HCT116 (cell line): ENCODE measurements at regions of chr4 and their contacts with region 1.

Region 1: DNA sequence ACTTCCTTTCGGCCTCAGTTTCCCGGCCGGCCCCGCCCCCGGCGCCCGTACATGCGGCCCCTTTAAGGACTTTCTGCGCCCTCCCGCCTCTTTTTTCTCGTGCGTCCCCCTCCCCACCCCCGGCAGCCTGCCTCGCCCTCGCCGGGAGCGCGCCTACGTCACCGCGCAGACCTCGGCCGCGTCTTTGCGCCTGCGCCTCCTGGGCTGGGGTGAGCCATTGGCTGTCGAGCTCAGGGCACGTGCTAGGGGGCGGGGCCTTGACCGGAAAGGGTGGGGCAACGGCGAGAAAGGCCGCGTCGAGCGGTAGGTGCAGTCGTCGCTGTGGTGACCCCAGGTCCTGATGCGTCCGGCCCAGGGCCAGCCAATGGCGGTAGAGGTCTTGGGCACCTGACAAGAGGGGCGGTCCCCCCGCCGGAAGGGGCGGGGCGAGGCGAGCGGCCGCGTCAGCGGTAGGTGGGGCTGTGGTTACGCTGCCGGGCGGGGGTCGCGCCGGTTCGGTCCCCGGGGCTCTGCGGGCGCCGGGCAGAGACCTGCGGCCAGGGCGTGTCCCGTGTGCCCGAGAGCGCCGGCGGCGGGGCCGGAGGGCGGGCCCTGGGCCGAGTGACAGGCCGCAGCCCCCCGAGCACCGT is at the start of gene UVSSA:
- DNase-seq: peak; percentile 99
- ATAC-seq: peak; percentile 91
- H3K4me3 ChIP-seq: peak within 1 kb of the TSS; percentile 74 to 76
- H3K27ac ChIP-seq: peak within 1 kb of the TSS; percentile 99
- H3K4me1 ChIP-seq: peaks cover 8 to 32% of the 10 kb centered on the region in 2 experiments
- H3K27me3 ChIP-seq: no peaks in the 10 kb centered on the region
- CTCF ChIP-seq: no peak
- POLR2A ChIP-seq: no peak
- RAD21 ChIP-seq: no peak
- total RNA-seq, gene UVSSA: 30.5 TPM

Region 2: DNA sequence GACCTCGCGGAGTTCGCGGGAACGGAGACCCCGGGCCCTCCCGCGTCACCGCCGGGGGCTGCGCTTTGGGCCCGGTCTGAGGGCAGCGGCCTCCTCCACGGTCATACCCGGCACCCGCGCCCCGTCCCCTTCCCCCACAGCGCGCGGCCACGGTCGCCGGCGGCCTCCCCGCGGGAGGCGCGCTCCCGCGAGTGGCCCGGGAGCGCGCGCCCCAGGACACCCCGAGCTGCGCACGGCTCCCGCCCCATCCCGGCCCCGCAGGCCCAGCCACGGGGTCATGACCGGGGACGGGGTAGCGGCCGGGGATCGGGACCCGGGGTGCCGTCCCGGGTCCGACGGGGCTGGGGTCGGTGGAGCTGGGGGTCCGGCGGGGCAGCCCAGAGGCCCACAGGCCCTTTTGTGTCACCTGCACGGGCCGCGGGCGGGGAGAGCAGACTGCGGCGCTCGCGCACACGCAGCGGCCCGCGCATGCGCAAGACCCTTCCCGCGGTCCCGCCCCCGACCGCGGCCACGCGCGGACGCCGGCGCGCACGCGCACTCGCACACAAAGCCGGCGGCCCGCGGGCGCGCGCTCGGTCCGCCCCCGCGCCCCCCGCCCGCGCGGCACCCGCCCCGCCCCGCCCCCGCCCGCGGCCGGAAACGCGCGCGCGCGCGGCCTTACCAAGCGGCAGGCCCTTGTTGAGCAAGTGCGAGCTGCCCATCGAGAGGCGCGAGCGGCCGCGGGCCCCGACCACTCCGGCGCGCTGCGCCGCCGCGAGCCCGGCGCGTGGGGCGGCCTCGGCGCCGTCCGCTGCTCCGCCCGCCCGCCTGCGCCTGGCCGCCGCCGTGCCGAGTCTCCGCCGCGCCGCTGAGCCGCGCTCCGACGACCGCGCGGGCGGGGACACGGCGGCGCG is 98.4 kb before region 1 on chr4 and contains the start of gene CTBP1:
- CTCF ChIA-PET with region 1: no interaction called
- POLR2A ChIA-PET with region 1: interaction called, 8 read pairs
- RAD21 ChIA-PET with region 1: no interaction called
- intact Hi-C with region 1: loop called (anchors 1 kb)
- DNase-seq: peak; percentile 59
- ATAC-seq: peak; percentile 67
- H3K4me3 ChIP-seq: peak within 1 kb of the TSS; percentile 86 to 90
- H3K27ac ChIP-seq: peak within 1 kb of the TSS; percentile 100
- H3K4me1 ChIP-seq: peaks cover 16 to 23% of the 10 kb centered on the region in 2 experiments
- H3K27me3 ChIP-seq: no peaks in the 10 kb centered on the region
- CTCF ChIP-seq: no peak
- POLR2A ChIP-seq: peak; percentile 40
- RAD21 ChIP-seq: no peak
- total RNA-seq, gene CTBP1: 175 TPM

Region 3: GRCh38 chr4:1289207-1290164 is 57.4 kb before region 1 on chr4 and contains the start of gene MAEA:
- CTCF ChIA-PET with region 1: no interaction called
- POLR2A ChIA-PET with region 1: interaction called, 5 read pairs
- RAD21 ChIA-PET with region 1: no interaction called
- intact Hi-C with region 1: loop called (anchors 5 kb)
- DNase-seq: peak; percentile 91
- ATAC-seq: peak; percentile 96
- H3K4me3 ChIP-seq: peak within 1 kb of the TSS; percentile 63 to 100
- H3K27ac ChIP-seq: peak within 1 kb of the TSS; percentile 87
- H3K4me1 ChIP-seq: peaks cover 14 to 29% of the 10 kb centered on the region in 2 experiments
- H3K27me3 ChIP-seq: no peaks in the 10 kb centered on the region
- CTCF ChIP-seq: no peak
- POLR2A ChIP-seq: peak; percentile 63
- RAD21 ChIP-seq: no peak
- total RNA-seq, gene MAEA: 88.3 TPM

Region 4: DNA sequence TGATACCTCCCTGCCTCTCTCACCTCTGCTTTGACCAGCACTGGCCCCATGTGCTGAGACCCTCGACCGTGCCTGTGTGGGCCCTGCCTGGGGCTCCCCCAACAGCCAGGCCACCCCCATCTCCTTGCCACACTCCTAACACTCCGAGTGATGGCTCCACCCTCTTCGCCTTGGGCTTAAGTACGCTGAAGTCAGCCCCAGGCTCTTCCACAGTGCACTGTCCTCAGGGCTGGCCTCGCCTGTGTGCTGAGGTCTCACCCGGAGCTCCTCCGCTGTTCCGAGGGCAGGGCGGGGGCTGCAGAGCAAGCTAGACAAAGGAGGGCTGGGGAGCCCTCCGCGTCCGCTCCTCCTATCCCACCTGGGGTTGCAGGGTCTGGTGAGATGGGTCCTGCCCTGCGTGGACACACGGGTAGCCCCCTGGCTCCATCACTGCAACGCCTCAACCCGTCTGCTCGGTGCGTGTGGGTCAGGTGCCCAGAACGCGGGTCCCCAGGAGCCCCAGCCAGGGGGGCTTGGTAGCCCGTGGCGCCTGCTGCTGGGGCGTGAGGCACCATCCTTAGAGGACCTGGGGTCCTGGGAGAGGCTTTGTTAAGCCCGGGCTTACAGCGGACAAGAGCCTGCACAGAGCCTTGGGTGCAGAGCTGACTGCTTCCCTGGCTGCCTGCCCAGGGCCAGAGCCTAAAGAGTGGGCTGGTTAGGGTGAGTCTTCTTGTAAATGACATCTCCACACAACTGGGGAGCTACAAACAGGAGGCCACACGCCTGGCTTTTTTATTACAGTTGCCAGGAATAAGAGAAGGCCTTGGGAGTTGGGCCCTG is 101.9 kb after region 1 on chr4:
- CTCF ChIA-PET with region 1: no interaction called
- POLR2A ChIA-PET with region 1: no interaction called
- RAD21 ChIA-PET with region 1: no interaction called
- intact Hi-C with region 1: no loop called
- DNase-seq: no peak
- ATAC-seq: no peak
- H3K4me3 ChIP-seq: no peak overlapping the region
- H3K27ac ChIP-seq: no peak overlapping the region
- H3K4me1 ChIP-seq: no peaks in the 10 kb centered on the region
- H3K27me3 ChIP-seq: 0 out of 2 replicates have a peak, but pooled peaks cover 4% of the 10 kb centered on the region
- CTCF ChIP-seq: no peak
- POLR2A ChIP-seq: no peak
- RAD21 ChIP-seq: no peak